SK-N-SH (cell line): ENCODE measurements at regions of chr6 and their contacts with region 1.

Region 1: GRCh38 chr6:2999618-3000557 is at the start of gene NQO2:
- DNase-seq: peak; percentile 99
- H3K4me3 ChIP-seq: peak within 1 kb of the TSS; percentile 78 to 84
- H3K27ac ChIP-seq: peak within 1 kb of the TSS; percentile 23 to 60; a peak in 3 of 4 replicates
- H3K4me1 ChIP-seq: peaks cover 0 to 11% of the 10 kb centered on the region in 2 experiments; a peak in 1 of 4 replicates
- H3K27me3 ChIP-seq: no peaks in the 10 kb centered on the region
- CTCF ChIP-seq: no peak
- EP300 ChIP-seq: no peak
- RAD21 ChIP-seq: no peak
- polyA plus RNA-seq, gene NQO2: 19.2 and 22.5 TPM in 2 replicates

Region 2: GRCh38 chr6:2839195-2839981 is 160.5 kb before region 1 on chr6:
- CTCF ChIA-PET with region 1: no interaction called
- POLR2A ChIA-PET with region 1: no interaction called
- DNase-seq: no peak
- H3K4me3 ChIP-seq: no peak overlapping the region; a peak in 1 of 4 replicates
- H3K27ac ChIP-seq: peak overlapping the region; percentile 36 to 67
- H3K4me1 ChIP-seq: peaks cover 24 to 26% of the 10 kb centered on the region in 2 experiments; a peak in 3 of 4 replicates
- H3K27me3 ChIP-seq: no peaks in the 10 kb centered on the region
- CTCF ChIP-seq: no peak
- EP300 ChIP-seq: no peak
- RAD21 ChIP-seq: no peak

Region 3: GRCh38 chr6:2959909-2960719 is 39.8 kb before region 1 on chr6:
- CTCF ChIA-PET with region 1: no interaction called
- POLR2A ChIA-PET with region 1: no interaction called
- DNase-seq: no peak
- H3K4me3 ChIP-seq: no peak overlapping the region
- H3K27ac ChIP-seq: peak overlapping the region in 1 of 2 experiments; percentile 78; a peak in 2 of 4 replicates
- H3K4me1 ChIP-seq: peaks cover 0 to 15% of the 10 kb centered on the region in 2 experiments; a peak in 3 of 4 replicates
- H3K27me3 ChIP-seq: no peaks in the 10 kb centered on the region
- CTCF ChIP-seq: no peak
- EP300 ChIP-seq: no peak
- RAD21 ChIP-seq: no peak

Region 4: DNA sequence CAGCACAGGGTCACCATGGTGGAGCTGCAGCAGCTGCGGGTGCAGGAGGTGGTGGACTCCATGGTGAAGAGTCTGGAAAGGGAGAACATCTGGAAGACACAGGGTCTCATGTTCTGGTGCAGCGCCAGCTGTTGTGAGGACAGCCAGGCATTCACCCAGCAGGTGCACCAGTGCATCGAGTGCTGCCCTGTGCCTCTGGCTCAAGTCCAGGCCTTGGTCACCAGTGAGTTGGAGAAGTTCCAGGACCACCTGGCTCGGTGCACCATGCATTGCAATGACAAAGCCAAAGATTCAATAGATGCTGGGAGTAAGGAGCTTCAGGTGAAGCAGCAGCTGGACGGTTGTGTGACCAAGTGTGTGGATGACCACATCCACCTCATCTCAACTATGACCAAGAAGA is 45.5 kb after region 1 on chr6:
- CTCF ChIA-PET with region 1: interaction called, 10 read pairs
- POLR2A ChIA-PET with region 1: no interaction called
- DNase-seq: no peak
- H3K4me3 ChIP-seq: no peak overlapping the region
- H3K27ac ChIP-seq: no peak overlapping the region
- H3K4me1 ChIP-seq: peaks cover 0 to 4% of the 10 kb centered on the region in 2 experiments; a peak in 1 of 4 replicates
- H3K27me3 ChIP-seq: peaks cover 5% of the 10 kb centered on the region; the same call in 1 of the 2 replicates
- CTCF ChIP-seq: no peak
- EP300 ChIP-seq: no peak
- RAD21 ChIP-seq: no peak

Region 5: GRCh38 chr6:3052481-3053230 is 52.8 kb after region 1 on chr6:
- CTCF ChIA-PET with region 1: interaction called, 10 read pairs
- POLR2A ChIA-PET with region 1: interaction called, 3 read pairs
- DNase-seq: no peak
- H3K4me3 ChIP-seq: no peak overlapping the region
- H3K27ac ChIP-seq: no peak overlapping the region
- H3K4me1 ChIP-seq: peaks cover 0 to 2% of the 10 kb centered on the region in 2 experiments; a peak in 1 of 4 replicates
- H3K27me3 ChIP-seq: peaks cover 5% of the 10 kb centered on the region; the same call in 1 of the 2 replicates
- CTCF ChIP-seq: no peak
- EP300 ChIP-seq: no peak
- RAD21 ChIP-seq: no peak

Region 6: GRCh38 chr6:3068329-3069214 is 68.7 kb after region 1 on chr6 and contains the start of gene RIPK1:
- CTCF ChIA-PET with region 1: interaction called, 10 read pairs
- POLR2A ChIA-PET with region 1: interaction called, 3 read pairs
- DNase-seq: peak; percentile 98
- H3K4me3 ChIP-seq: peak within 1 kb of the TSS; percentile 90 to 93
- H3K27ac ChIP-seq: peak within 1 kb of the TSS; percentile 95 to 98
- H3K4me1 ChIP-seq: peaks cover 7 to 14% of the 10 kb centered on the region in 2 experiments; a peak in 3 of 4 replicates
- H3K27me3 ChIP-seq: no peaks in the 10 kb centered on the region
- CTCF ChIP-seq: peak; percentile 42
- EP300 ChIP-seq: no peak
- RAD21 ChIP-seq: peak; percentile 45
- polyA plus RNA-seq, gene RIPK1: 12.0 and 15.7 TPM in 2 replicates